OCI-LY7 (cell line): ENCODE measurements at regions of chr9 and their contacts with region 1.

Region 1: GRCh38 chr9:114027159-114027895 is 50.8 kb downstream of the AMBP start:
- DNase-seq: no peak
- H3K4me3 ChIP-seq: no peak overlapping the region
- H3K27ac ChIP-seq: no peak overlapping the region
- H3K4me1 ChIP-seq: no peaks in the 10 kb centered on the region
- CTCF ChIP-seq: no peak

Region 2: DNA sequence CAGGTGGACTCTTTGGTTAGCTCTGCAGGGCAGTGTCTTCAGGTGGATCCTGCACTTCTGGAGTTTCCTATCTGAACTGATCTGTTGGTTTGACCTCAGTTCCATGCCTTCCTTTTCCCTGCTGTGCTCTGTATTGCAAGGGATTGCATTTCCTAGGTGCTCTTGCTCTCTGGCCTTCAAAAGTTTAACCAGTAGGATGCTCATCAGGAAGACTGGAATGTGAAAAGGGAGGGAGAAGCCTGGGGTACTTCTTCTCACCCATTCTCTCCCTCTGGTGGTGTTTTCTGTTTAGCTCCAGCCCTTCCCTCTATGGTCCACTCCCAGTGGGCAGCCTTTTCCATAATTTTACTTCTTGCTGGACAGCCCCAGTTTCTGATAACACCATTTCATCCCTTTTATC is 72.7 kb before region 1 on chr9:
- CTCF ChIA-PET with region 1: interaction called, 10 read pairs
- POLR2A ChIA-PET with region 1: no interaction called
- intact Hi-C with region 1: no loop called
- DNase-seq: no peak
- H3K4me3 ChIP-seq: no peak overlapping the region
- H3K27ac ChIP-seq: no peak overlapping the region
- H3K4me1 ChIP-seq: no peaks in the 10 kb centered on the region
- CTCF ChIP-seq: no peak

Region 3: DNA sequence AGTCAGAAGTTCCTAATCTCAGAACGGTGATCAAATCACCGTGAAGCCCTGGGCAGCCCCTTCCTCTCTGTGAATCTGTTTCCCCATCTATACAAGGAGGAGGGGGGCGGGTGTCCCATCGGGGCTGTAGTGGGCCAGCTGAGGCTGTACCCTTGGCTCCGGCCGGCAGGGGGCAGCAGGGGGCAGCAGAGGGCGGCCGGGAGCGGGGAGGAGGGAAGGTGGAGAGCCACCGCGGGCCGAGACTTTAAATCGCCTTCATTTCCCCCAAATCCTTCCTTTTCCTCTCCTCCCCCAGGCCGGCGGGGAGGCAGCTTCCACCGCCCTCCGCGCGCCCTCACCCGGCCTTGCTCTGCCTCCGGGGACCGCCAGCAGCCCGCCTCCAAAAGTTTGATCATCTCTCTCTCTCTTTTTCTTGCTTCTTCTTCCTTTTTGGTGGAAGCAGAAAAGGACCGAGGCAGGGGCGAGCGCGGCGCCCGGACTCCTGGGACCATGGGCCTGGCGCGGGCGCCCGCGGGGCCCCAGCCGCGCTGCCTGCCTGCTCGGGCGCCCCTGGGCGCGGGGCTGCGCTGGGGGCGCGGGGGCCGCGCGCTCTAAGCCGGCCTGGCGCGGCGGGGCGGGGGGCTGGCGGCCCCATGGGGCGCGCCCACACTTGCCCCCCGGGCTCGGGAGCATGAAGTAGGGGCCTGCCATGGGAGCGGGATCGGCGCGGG is 128.1 kb after region 1 on chr9 and contains the start of gene COL27A1:
- CTCF ChIA-PET with region 1: no interaction called
- POLR2A ChIA-PET with region 1: no interaction called
- intact Hi-C with region 1: no loop called
- DNase-seq: peak; percentile 51
- H3K4me3 ChIP-seq: no peak within 1 kb of the TSS
- H3K27ac ChIP-seq: no peak within 1 kb of the TSS
- H3K4me1 ChIP-seq: no peaks in the 10 kb centered on the region
- CTCF ChIP-seq: peak; percentile 83
- total RNA-seq, gene COL27A1: not detected in 2 replicates

Region 4: GRCh38 chr9:114196979-114197622 is 169.8 kb after region 1 on chr9:
- CTCF ChIA-PET with region 1: interaction called, 15 read pairs
- POLR2A ChIA-PET with region 1: no interaction called
- intact Hi-C with region 1: no loop called
- DNase-seq: no peak
- H3K4me3 ChIP-seq: no peak overlapping the region
- H3K27ac ChIP-seq: no peak overlapping the region
- H3K4me1 ChIP-seq: no peaks in the 10 kb centered on the region
- CTCF ChIP-seq: no peak